SK-N-SH (cell line): ENCODE measurements at regions of chr19 and their contacts with region 1.

Region 1: DNA sequence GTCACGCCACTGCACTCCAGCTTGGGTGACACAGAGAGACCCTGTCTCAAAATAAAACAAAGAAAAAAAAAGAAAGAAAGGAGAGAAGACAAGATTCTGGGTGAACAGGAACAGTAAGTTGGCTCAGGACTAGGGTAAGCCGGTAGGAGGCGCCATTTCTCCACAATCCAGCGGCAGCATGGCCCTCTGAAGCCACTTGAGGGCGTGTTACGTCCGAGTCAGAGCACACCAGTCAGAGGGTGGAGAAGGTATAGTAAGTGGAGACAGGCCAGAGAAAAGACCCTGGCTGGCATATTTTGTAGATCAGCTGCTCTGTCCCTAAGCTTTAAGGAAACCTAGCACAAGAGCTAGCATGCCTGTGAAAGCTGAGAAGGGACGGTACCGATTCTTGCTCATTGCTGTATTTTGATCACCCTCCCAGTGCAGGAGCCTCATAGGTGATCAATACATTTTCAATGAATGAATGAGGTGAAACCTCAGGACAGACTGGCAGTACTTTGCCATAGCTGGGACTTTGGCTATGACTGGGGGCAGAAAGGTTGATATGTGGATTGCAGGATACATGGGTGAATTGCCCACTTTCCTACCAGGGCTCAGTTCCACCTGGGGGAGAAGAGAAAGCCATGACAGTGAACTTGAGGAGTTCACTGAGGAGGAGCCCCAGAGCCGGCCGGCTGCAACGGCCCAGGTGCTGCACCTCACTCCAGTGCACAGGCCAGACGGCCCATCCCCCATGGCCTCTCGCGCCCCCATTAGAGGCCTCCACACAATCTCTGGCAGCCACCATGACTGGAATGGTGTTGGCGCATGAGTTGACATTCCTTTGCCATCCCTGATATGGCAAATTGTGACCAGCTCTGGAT is 23.5 kb downstream of the POU2F2 start:
- DNase-seq: peak; percentile 91
- H3K4me3 ChIP-seq: peak overlapping the region in 1 of 2 experiments; percentile 34; a peak in 1 of 4 replicates
- H3K27ac ChIP-seq: no peak overlapping the region
- H3K4me1 ChIP-seq: peaks cover 0 to 31% of the 10 kb centered on the region in 2 experiments; a peak in 3 of 4 replicates
- H3K27me3 ChIP-seq: no peaks in the 10 kb centered on the region
- CTCF ChIP-seq: peak; percentile 100
- EP300 ChIP-seq: no peak
- RAD21 ChIP-seq: peak; percentile 100

Region 2: DNA sequence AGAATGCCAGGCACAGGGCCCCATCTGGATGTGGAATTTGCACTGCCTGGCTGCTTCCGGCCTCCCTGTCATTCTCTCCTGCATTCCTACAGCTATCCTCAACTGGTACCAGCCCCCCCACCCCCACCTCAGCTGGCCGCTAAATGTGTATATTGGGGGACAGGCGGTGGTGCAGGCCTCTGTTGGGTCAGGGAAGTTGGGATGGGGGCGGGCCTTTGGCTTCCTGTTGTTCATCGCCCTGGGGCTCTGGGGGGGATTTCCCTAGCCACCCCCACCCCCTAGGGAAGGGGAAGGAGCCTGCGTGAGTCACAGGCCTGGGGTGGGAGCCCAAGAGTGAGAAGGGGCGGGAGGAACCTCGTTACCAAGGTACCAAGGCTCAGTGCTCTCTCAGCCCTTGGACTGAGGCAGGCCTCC is 12.9 kb after region 1 on chr19:
- CTCF ChIA-PET with region 1: interaction called, 45 read pairs
- POLR2A ChIA-PET with region 1: no interaction called
- DNase-seq: no peak
- H3K4me3 ChIP-seq: no peak overlapping the region
- H3K27ac ChIP-seq: peak overlapping the region in 1 of 2 experiments; percentile 81; a peak in 2 of 4 replicates
- H3K4me1 ChIP-seq: peaks cover 7 to 26% of the 10 kb centered on the region in 2 experiments; a peak in 3 of 4 replicates
- H3K27me3 ChIP-seq: no peaks in the 10 kb centered on the region
- CTCF ChIP-seq: no peak
- EP300 ChIP-seq: peak in 1 of 2 experiments; percentile 80; a peak in 1 of 4 replicates
- RAD21 ChIP-seq: no peak

Region 3: DNA sequence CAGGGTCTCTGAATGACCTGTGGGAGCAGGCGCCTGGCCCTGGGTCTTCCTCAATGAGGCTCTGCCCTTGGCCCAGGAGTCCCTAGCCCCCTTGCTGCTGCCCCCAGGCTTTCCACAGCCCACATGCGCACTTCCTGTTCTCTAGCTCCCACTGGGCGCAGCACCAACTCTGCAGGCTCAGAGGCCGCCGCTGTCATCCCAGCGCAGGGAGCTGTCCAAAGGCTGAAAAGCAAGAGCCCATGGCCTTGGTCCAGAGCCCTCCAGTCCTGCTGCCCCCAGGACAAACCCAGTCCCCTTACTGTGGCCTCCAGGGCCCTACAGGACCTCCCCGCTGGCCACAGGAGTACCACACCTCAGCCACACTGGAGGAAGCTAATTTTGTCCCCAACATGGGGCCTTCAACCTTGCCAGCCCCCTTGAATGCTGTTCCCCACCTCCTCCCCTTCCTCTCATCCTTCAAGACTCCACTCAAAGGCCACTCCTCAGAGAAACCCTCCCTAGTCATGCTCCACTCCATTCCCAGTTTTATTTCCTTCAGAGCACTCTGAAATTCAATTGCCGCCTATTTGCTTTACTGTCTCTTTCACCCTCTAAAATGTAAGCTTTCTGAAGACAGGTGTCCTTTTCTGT is 31.5 kb after region 1 on chr19:
- CTCF ChIA-PET with region 1: interaction called, 38 read pairs
- POLR2A ChIA-PET with region 1: no interaction called
- DNase-seq: no peak
- H3K4me3 ChIP-seq: no peak overlapping the region
- H3K27ac ChIP-seq: no peak overlapping the region
- H3K4me1 ChIP-seq: peaks cover 0 to 16% of the 10 kb centered on the region in 2 experiments; a peak in 1 of 4 replicates
- H3K27me3 ChIP-seq: peaks cover 4% of the 10 kb centered on the region
- CTCF ChIP-seq: no peak
- EP300 ChIP-seq: no peak
- RAD21 ChIP-seq: no peak

Region 4: DNA sequence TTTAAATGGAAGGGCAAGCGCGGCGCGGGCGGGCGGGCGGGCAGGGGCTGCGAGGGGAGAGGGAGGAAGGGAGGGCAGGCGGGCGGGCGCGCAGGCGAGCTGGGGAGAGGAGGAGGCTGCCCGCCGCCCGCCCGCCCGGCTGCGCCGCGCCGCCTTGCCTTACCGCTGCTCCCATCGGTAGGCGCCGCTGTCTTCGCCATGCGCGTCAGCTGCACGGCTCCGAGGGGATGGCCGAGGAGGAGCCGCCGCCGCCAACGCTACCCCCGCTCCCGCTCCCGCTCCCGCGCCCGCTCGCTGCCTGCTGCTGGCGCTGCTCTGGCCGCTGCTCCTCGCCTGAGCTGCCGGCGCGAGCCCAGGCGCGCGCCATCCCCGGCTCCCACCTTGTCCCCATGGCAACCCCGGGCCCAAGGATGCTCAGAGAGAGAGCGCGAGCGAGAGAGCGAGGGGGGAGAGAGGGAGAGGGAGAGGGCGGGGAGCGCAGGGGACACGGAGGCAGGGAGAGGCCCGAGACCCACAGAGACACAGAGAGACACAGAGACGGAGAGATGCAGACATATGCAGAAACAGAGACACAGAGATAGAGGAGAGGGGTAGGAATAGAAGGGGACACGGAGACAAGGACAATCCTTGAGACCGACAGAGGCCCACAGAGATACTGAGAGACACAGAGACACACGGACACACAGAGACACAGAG is 68.4 kb after region 1 on chr19:
- CTCF ChIA-PET with region 1: interaction called, 116 read pairs
- POLR2A ChIA-PET with region 1: no interaction called
- DNase-seq: peak; percentile 91
- H3K4me3 ChIP-seq: peak overlapping the region; percentile 52 to 78
- H3K27ac ChIP-seq: peak overlapping the region in 1 of 2 experiments; percentile 41; a peak in 1 of 4 replicates
- H3K4me1 ChIP-seq: peaks cover 0 to 11% of the 10 kb centered on the region in 2 experiments; a peak in 1 of 4 replicates
- H3K27me3 ChIP-seq: peaks cover 37% of the 10 kb centered on the region
- CTCF ChIP-seq: peak; percentile 36
- EP300 ChIP-seq: no peak
- RAD21 ChIP-seq: no peak

Region 5: DNA sequence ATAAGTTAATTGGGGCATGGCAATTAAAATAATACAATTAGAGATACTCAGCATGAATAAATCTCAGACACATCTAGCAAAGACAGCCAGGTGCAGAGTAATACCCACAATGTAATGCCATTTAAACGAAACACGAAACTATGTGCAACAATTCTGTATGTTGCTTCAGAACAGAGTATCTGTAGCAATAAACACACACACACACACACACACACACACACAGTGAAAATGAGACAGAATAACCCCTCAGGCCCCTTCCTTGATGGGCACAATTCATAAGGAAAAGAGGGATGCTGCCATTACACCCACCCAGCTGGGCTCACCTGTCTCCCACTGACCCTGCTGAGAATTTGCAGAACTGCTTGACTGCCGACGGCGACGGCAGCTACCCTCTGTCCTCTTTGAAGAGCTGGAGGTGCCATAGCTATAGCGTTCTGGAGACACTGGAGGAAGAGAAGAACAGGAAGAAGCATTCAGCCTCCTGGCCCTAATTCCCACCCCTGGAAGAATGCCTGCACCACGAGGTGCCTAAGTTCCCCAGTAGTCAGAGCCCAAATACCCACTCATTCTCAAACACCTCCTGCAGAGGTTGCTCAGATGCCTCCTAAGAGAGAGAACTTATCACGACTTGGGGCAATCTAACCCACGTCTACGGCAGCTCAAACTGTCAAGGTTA is 106.2 kb after region 1 on chr19:
- CTCF ChIA-PET with region 1: interaction called, 10 read pairs
- POLR2A ChIA-PET with region 1: no interaction called
- DNase-seq: no peak
- H3K4me3 ChIP-seq: no peak overlapping the region
- H3K27ac ChIP-seq: no peak overlapping the region
- H3K4me1 ChIP-seq: peaks cover 5 to 21% of the 10 kb centered on the region in 2 experiments; a peak in 2 of 4 replicates
- H3K27me3 ChIP-seq: no peaks in the 10 kb centered on the region
- CTCF ChIP-seq: no peak
- EP300 ChIP-seq: no peak
- RAD21 ChIP-seq: no peak